CD14-positive monocyte (primary cell): ENCODE measurements at regions of chr7 and their contacts with region 1.

Region 1: GRCh38 chr7:139075031-139075652 is 34.4 kb downstream of the ZC3HAV1 start:
- DNase-seq: peak; percentile 68 to 81 (median 80)
- H3K4me3 ChIP-seq: no peak overlapping the region
- H3K4me3 Mint-ChIP-seq: no peak overlapping the region
- H3K27ac ChIP-seq: peak overlapping the region; percentile 22 to 64
- H3K27ac Mint-ChIP-seq: peak overlapping the region; percentile 72 to 90 (median 81)
- H3K4me1 ChIP-seq: peaks cover 10 to 13% of the 10 kb centered on the region in 2 donors
- H3K4me1 Mint-ChIP-seq: peaks cover 19% of the 10 kb centered on the region
- H3K27me3 ChIP-seq: no peaks in the 10 kb centered on the region
- H3K27me3 Mint-ChIP-seq: peaks cover 0 to 2% (median 0%) of the 10 kb centered on the region in 3 donors
- CTCF ChIP-seq: peak; percentile 82

Region 2: DNA sequence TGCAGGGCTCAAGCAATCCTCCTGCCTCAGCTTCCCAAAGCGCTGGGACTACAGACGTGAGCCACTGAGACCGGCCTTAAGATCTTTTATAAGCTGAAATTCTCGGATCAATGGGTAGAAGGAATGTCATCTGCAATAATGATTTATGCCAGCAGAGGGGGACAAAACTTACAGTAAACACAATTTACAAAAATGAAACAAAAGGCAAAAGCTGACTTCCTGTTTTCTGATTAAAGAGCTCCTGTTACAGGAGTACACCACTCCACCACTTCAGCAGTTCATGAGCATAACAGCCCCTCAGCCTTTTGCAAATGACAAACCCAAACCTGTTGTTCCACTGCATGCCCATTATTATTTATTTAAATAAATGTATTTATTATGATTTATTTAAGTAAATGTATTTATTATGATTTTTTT is 188.6 kb before region 1 on chr7:
- intact Hi-C with region 1: loop called in 1 of 2 experiments (anchors 10 kb)
- DNase-seq: peak; percentile 51 to 84 (median 65)
- H3K4me3 ChIP-seq: no peak overlapping the region
- H3K4me3 Mint-ChIP-seq: no peak overlapping the region
- H3K27ac ChIP-seq: no peak overlapping the region
- H3K27ac Mint-ChIP-seq: no peak overlapping the region
- H3K4me1 ChIP-seq: no peaks in the 10 kb centered on the region
- H3K4me1 Mint-ChIP-seq: peaks cover 4% of the 10 kb centered on the region
- H3K27me3 ChIP-seq: no peaks in the 10 kb centered on the region
- H3K27me3 Mint-ChIP-seq: no peaks in the 10 kb centered on the region
- CTCF ChIP-seq: peak; percentile 90